GM12878 (cell line): ENCODE measurements at regions of chr9 and their contacts with region 1.

Region 1: DNA sequence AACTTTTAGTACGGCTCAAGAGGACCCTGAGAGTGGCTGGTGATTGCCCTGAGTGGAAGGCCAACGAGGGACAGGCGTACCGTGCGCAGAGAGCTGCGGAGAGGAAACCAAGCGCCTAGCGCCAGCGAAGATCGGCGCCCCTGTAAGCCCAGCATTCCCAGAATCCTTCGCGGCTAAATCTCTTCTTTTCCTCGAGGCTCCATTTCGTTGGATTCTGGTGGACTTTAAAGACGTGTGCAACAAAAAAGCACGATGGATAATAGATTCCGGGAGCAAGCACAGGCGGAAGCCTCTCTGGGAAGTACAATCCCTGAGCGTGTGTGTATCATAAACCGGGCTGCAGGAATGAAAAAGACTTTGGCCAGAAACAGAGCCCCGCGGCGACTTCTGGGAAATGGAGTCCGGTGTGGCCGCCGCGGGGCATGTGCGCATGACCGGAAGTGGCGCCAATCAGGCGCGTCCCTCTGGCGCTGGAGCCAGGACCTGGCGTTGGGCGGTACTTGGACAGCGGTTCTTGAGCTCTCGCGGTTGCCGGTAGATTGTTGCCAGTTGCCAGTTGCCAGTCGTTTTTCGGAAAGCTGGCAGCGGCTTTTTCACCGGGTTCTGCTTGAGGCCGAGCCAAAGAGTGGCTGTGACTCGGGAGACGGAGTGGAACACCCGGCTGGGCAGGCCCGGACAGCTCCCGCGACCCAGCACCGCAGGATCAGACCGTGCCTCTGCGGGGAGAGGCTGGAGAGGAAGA is at the start of gene ZNF79:
- DNase-seq: peak; percentile 72
- ATAC-seq: peak; percentile 94
- H3K4me3 ChIP-seq: peak within 1 kb of the TSS; percentile 90
- H3K27ac ChIP-seq: peak within 1 kb of the TSS; percentile 88
- H3K4me1 ChIP-seq: peaks cover 13% of the 10 kb centered on the region
- H3K27me3 ChIP-seq: no peaks in the 10 kb centered on the region
- CTCF ChIP-seq: no peak
- EP300 ChIP-seq: no peak
- POLR2A ChIP-seq: peak; percentile 90
- RAD21 ChIP-seq: no peak
- polyA plus RNA-seq, gene ZNF79: 1.8 to 2.0 TPM

Region 2: GRCh38 chr9:126947529-126947928 is 476.6 kb before region 1 on chr9:
- CTCF ChIA-PET with region 1: no interaction called
- POLR2A ChIA-PET with region 1: no interaction called
- RAD21 ChIA-PET with region 1: no interaction called
- SMC1A ChIA-PET with region 1: no interaction called
- in situ Hi-C with region 1: no loop called
- intact Hi-C with region 1: loop called (anchors 10 kb)
- DNase-seq: no peak
- ATAC-seq: peak; percentile 66
- H3K4me3 ChIP-seq: no peak overlapping the region
- H3K27ac ChIP-seq: no peak overlapping the region
- H3K4me1 ChIP-seq: no peaks in the 10 kb centered on the region
- H3K27me3 ChIP-seq: no peaks in the 10 kb centered on the region
- CTCF ChIP-seq: peak; percentile 36 to 56 (median 45); a peak in 4 of 6 replicates
- EP300 ChIP-seq: no peak
- POLR2A ChIP-seq: no peak
- RAD21 ChIP-seq: peak; percentile 59

Region 3: DNA sequence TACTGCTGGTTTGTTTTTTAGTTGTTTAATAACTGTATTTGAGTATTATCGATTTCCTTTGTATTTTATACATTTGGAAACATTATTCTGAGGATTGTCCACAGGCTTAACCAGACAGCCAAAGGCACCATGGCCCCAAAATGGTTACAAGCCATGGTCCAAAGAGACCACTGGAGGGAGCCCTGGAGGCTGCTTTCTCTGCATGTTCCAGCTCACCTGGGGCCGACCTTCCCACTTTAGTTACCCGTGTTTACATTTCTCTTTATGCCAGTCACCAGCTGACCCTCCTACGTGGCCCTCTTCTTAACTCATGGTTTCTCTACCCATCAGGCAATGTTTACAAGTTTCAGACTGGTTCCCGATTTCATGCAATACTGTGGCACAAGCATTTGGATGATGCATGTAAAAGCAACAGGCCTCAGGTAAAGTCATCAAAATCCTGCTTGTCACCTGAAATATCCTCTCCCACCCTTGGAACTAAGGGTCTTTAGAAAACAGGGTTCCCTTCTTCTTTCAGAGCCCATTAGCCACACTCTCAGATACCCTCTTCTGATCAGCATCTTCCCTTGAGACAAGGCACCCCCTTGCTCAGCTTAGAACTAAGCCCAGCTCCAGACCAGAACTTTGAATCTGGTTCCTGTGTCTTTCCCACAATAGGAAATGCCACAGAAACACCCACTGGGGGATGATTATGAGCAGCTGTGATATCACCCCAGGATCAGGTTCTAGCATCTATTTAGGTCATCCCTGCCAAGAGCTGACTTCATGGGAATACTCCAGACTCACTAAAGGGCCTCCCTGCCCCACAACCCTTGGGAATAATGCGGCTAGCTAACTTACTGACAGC is 209.5 kb before region 1 on chr9:
- CTCF ChIA-PET with region 1: interaction called, 4 read pairs
- POLR2A ChIA-PET with region 1: no interaction called
- RAD21 ChIA-PET with region 1: no interaction called
- SMC1A ChIA-PET with region 1: no interaction called
- in situ Hi-C with region 1: no loop called
- intact Hi-C with region 1: loop called (anchors 1 kb)
- DNase-seq: no peak
- ATAC-seq: peak; percentile 96
- H3K4me3 ChIP-seq: no peak overlapping the region
- H3K27ac ChIP-seq: no peak overlapping the region
- H3K4me1 ChIP-seq: no peaks in the 10 kb centered on the region
- H3K27me3 ChIP-seq: no peaks in the 10 kb centered on the region
- CTCF ChIP-seq: peak; percentile 85 to 91 (median 86); a peak in 5 of 6 replicates
- EP300 ChIP-seq: no peak
- POLR2A ChIP-seq: no peak
- RAD21 ChIP-seq: peak; percentile 88

Region 4: GRCh38 chr9:127311239-127311741 is 112.8 kb before region 1 on chr9:
- CTCF ChIA-PET with region 1: interaction called, 3 read pairs
- POLR2A ChIA-PET with region 1: no interaction called
- RAD21 ChIA-PET with region 1: no interaction called
- SMC1A ChIA-PET with region 1: no interaction called
- in situ Hi-C with region 1: no loop called
- intact Hi-C with region 1: loop called (anchors 5 kb)
- DNase-seq: no peak
- ATAC-seq: peak; percentile 58
- H3K4me3 ChIP-seq: no peak overlapping the region
- H3K27ac ChIP-seq: no peak overlapping the region
- H3K4me1 ChIP-seq: no peaks in the 10 kb centered on the region
- H3K27me3 ChIP-seq: no peaks in the 10 kb centered on the region
- CTCF ChIP-seq: peak; percentile 33 to 45 (median 43)
- EP300 ChIP-seq: no peak
- POLR2A ChIP-seq: no peak
- RAD21 ChIP-seq: peak; percentile 49

Region 5: DNA sequence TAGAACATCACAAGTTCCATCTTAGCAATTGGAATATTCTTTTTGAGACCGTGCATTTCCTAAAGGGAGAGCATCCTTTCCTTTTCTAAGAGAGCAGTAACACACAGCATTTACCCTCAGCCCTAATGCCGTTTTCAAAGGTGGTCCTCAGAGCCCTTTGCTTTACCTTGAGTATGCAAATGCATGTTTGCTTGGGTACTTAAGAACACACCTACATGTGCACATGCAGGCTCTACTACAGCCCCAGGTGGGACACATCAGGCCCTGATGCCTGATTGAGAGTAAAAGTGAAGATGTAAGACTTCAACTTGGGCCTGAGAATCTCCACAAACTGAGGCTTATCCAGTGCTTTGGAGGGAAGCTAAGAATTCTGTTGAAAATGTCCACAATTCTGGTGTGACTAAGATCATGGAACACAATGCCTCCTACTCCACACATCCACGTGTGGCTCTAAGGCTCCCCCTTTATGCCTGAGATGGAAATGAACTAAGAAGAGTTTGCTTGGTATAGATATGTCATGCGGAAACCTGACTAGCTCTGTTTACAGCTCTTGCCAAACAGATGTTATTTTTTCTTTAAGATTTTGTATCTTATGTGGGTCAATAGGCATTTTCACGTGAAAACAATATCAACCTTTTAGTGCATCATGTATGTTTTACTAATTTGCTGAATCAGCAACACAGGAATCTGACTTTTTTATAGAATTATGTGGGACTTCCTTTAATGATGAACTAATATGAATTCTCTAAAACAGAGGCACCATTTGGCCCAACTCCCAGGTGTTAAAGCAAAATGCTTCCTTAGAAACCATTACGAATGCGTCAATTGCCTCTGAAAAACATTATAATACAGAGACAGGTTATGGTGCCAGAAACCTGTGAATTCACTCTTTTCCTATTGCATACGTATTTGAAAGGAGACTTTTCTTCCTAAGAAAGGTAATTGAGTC is 76.0 kb before region 1 on chr9:
- CTCF ChIA-PET with region 1: no interaction called
- POLR2A ChIA-PET with region 1: no interaction called
- RAD21 ChIA-PET with region 1: no interaction called
- SMC1A ChIA-PET with region 1: no interaction called
- in situ Hi-C with region 1: no loop called
- intact Hi-C with region 1: no loop called
- DNase-seq: no peak
- ATAC-seq: peak; percentile 50
- H3K4me3 ChIP-seq: no peak overlapping the region
- H3K27ac ChIP-seq: no peak overlapping the region
- H3K4me1 ChIP-seq: no peaks in the 10 kb centered on the region
- H3K27me3 ChIP-seq: no peaks in the 10 kb centered on the region
- CTCF ChIP-seq: peak; percentile 42 to 50 (median 45); a peak in 5 of 6 replicates
- EP300 ChIP-seq: no peak
- POLR2A ChIP-seq: no peak
- RAD21 ChIP-seq: peak; percentile 67

Region 6: GRCh38 chr9:127411122-127411521 is 13.0 kb before region 1 on chr9:
- CTCF ChIA-PET with region 1: no interaction called
- POLR2A ChIA-PET with region 1: no interaction called
- RAD21 ChIA-PET with region 1: no interaction called
- SMC1A ChIA-PET with region 1: no interaction called
- in situ Hi-C with region 1: no loop called
- intact Hi-C with region 1: no loop called
- DNase-seq: no peak
- ATAC-seq: no peak
- H3K4me3 ChIP-seq: no peak overlapping the region
- H3K27ac ChIP-seq: no peak overlapping the region
- H3K4me1 ChIP-seq: no peaks in the 10 kb centered on the region
- H3K27me3 ChIP-seq: no peaks in the 10 kb centered on the region
- CTCF ChIP-seq: no peak
- EP300 ChIP-seq: no peak
- POLR2A ChIP-seq: no peak
- RAD21 ChIP-seq: no peak

Region 7: DNA sequence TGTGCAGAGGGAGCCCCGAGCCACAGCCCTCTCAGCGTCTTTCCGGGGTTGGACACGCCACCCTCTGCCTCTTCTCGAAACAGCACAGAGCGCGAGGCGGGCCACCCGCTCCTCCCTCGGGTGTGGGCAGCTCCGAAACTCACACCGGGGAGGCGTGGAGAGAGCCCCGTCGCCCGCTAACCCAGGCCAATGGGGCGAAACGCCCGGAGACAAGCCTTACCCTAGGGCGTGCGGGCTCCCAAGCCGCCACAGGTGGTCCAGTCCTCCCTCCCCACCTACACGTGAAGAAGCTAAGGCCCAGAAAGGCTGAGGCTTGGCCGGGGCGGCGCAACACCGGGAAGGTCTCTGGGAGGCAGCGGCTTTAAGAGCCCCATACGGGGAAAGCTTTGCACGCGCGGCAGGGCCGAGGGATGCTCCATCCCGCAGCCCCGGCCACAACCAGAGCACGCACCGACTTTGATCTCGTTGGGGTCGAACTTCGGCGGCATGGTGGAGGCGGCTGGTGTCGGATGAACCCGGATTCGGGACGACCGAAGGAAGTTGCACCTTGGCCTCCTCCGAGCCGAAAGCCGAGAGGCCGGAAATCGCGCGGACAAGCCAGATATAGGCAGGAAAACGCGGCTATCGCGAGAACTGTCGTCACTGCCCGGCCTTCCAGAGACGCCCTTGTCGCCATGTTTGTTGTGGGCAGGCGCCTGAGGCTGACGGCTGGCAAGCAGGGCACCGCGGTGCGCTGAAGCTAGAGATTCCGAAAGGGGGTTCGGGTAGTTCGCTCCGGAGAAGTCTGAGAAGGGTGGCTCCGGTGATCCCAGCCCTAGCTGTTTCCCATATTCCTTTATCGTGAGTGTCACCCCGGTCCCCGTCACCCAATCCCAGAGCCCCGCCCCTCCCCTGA is 27.0 kb after region 1 on chr9 and contains the starts of genes LRSAM1 and RPL12:
- CTCF ChIA-PET with region 1: interaction called, 8 read pairs
- POLR2A ChIA-PET with region 1: interaction called, 26 read pairs
- RAD21 ChIA-PET with region 1: interaction called, 3 read pairs
- SMC1A ChIA-PET with region 1: interaction called, 7 read pairs
- in situ Hi-C with region 1: no loop called
- intact Hi-C with region 1: no loop called
- DNase-seq: peak; percentile 79
- ATAC-seq: peak; percentile 74
- H3K4me3 ChIP-seq: peak within 1 kb of the TSS; percentile 93
- H3K27ac ChIP-seq: peak within 1 kb of the TSS; percentile 94
- H3K4me1 ChIP-seq: peaks cover 6% of the 10 kb centered on the region; the same call in 1 of the 2 replicates
- H3K27me3 ChIP-seq: no peaks in the 10 kb centered on the region
- CTCF ChIP-seq: peak in 1 of 3 experiments; percentile 8; a peak in 1 of 6 replicates
- EP300 ChIP-seq: no peak
- POLR2A ChIP-seq: peak; percentile 99
- RAD21 ChIP-seq: 0 out of 2 replicates have a peak, but pooled peaks have one; percentile 0
- polyA plus RNA-seq, gene LRSAM1: 0.14 to 0.53 TPM
- polyA plus RNA-seq, gene RPL12: 3,077 to 3,412 TPM